ENCODE measurements at regions of chr15 and their contacts with region 1.

Region 1: DNA sequence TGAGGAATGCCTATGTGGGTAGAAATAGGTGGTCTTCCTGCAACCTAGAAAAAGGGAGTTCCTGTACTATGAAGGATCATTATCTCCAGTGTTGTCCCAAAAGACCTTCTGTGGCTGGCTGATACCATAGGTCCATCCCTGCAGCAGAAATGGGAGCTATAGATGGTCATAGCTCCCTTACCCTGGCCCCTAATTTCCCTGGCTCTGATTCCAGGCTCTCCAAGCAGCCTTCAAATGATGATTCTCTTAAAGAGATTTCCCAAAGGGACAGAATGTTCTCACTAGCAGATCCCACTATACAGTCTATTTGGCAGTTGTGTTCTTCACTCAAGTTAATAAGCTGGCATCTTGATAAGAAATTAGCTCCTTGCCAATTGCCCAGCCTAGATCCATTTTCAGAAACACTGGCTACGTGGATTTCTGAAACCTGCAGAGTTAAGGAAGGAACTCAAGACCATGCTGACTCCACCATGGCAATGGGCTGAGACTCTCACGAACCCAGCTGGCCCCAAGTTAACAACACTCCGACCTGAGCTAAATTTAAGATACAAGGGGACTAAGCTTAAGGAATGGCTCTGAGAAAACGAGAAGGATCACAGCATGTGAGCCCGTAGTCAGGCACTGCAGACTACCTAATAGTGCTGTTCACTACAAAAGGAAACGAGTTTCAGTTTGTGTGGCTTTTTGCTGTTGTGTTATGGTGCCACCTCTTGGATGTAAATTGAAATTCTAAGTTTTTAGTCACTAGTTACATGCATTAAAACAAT is 11.4 kb downstream of the C15orf40 start:
- DNase-seq: peak; percentile 71
- H3K4me3 ChIP-seq: peak overlapping the region in 2 of 3 experiments; percentile 36 to 38
- H3K27ac ChIP-seq: no peak overlapping the region
- H3K4me1 ChIP-seq: peaks cover 3% of the 10 kb centered on the region
- H3K27me3 ChIP-seq: no peaks in the 10 kb centered on the region
- CTCF ChIP-seq: peak; percentile 24 to 51
- POLR2A ChIP-seq: no peak

Region 2: GRCh38 chr15:82530606-82531379 is 469.3 kb before region 1 on chr15:
- CTCF ChIA-PET with region 1: interaction called, 12 read pairs
- POLR2A ChIA-PET with region 1: no interaction called
- dilution Hi-C with region 1: no loop called
- intact Hi-C with region 1: loop called (anchors 2 kb)
- DNase-seq: peak; percentile 78
- H3K4me3 ChIP-seq: no peak overlapping the region
- H3K27ac ChIP-seq: no peak overlapping the region
- H3K4me1 ChIP-seq: no peaks in the 10 kb centered on the region
- H3K27me3 ChIP-seq: no peaks in the 10 kb centered on the region
- CTCF ChIP-seq: peak; percentile 73 to 74
- POLR2A ChIP-seq: no peak

Region 3: GRCh38 chr15:82832601-82833361 is 167.3 kb before region 1 on chr15:
- CTCF ChIA-PET with region 1: interaction called, 3 read pairs
- POLR2A ChIA-PET with region 1: no interaction called
- dilution Hi-C with region 1: no loop called
- intact Hi-C with region 1: loop called (anchors 5 kb)
- DNase-seq: peak; percentile 45
- H3K4me3 ChIP-seq: no peak overlapping the region
- H3K27ac ChIP-seq: peak overlapping the region; percentile 24
- H3K4me1 ChIP-seq: peaks cover 16% of the 10 kb centered on the region
- H3K27me3 ChIP-seq: no peaks in the 10 kb centered on the region
- CTCF ChIP-seq: no peak
- POLR2A ChIP-seq: no peak

Region 4: GRCh38 chr15:82942617-82943078 is 57.4 kb before region 1 on chr15:
- CTCF ChIA-PET with region 1: no interaction called
- POLR2A ChIA-PET with region 1: no interaction called
- dilution Hi-C with region 1: no loop called
- intact Hi-C with region 1: no loop called
- DNase-seq: no peak
- H3K4me3 ChIP-seq: no peak overlapping the region
- H3K27ac ChIP-seq: no peak overlapping the region
- H3K4me1 ChIP-seq: no peaks in the 10 kb centered on the region
- H3K27me3 ChIP-seq: no peaks in the 10 kb centered on the region
- CTCF ChIP-seq: no peak
- POLR2A ChIP-seq: no peak

Region 5: GRCh38 chr15:83036253-83036652 is 36.2 kb after region 1 on chr15:
- CTCF ChIA-PET with region 1: no interaction called
- POLR2A ChIA-PET with region 1: no interaction called
- dilution Hi-C with region 1: no loop called
- intact Hi-C with region 1: no loop called
- DNase-seq: no peak
- H3K4me3 ChIP-seq: no peak overlapping the region
- H3K27ac ChIP-seq: no peak overlapping the region
- H3K4me1 ChIP-seq: no peaks in the 10 kb centered on the region
- H3K27me3 ChIP-seq: no peaks in the 10 kb centered on the region
- CTCF ChIP-seq: no peak
- POLR2A ChIP-seq: no peak

Region 6: DNA sequence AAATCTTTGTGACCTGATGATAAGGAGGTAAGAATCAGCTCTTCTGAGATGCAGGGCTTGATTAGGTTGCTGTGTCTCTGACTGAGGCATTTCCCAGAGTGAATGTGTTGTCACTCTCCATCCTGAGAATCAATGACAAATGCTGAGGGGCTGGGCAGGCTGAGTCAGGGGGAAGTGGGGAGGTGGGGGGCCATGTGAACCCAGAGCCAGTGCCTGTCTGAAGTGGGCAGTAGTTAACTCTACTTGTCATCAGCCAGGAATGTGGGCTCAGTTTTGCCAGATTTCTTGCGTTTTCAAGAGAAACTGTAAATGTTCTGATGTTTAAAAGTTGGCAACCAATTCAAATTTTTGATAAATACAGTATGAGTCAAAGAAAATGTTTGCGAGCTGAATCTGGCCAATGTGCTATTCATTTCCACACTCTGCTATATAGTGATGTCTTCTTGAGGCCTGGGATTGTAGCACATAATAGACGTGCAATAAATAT is 287.5 kb after region 1 on chr15:
- CTCF ChIA-PET with region 1: no interaction called
- POLR2A ChIA-PET with region 1: no interaction called
- dilution Hi-C with region 1: no loop called
- intact Hi-C with region 1: no loop called
- DNase-seq: peak; percentile 81
- H3K4me3 ChIP-seq: no peak overlapping the region
- H3K27ac ChIP-seq: peak overlapping the region; percentile 64
- H3K4me1 ChIP-seq: peaks cover 33% of the 10 kb centered on the region
- H3K27me3 ChIP-seq: peaks cover 0 to 5% of the 10 kb centered on the region in 2 experiments
- CTCF ChIP-seq: no peak
- POLR2A ChIP-seq: no peak

Measured in endothelial cell of umbilical vein (primary cell).